Activated T-helper 2 cell treated with anti-CD3 and anti-CD28 coated beads, Interferon-gamma antibody, Interleukin-2, Interleukin-4, amounts not matched to agents 10 μg/mL and 5 μg/mL and 100 μg/mL, durations not matched to agents 14 hours and 24 hours and 36 hours (primary cell): ENCODE measurements at regions of chr2 and their contacts with region 1.

Region 1: GRCh38 chr2:46979571-46979979 is 64.0 kb upstream of the MCFD2 start:
- DNase-seq: no peak
- H3K4me3 Mint-ChIP-seq: peak overlapping the region; percentile 65
- H3K27ac Mint-ChIP-seq: peak overlapping the region; percentile 84
- H3K4me1 Mint-ChIP-seq: peaks cover 61% of the 10 kb centered on the region
- H3K27me3 Mint-ChIP-seq: no peaks in the 10 kb centered on the region

Region 2: DNA sequence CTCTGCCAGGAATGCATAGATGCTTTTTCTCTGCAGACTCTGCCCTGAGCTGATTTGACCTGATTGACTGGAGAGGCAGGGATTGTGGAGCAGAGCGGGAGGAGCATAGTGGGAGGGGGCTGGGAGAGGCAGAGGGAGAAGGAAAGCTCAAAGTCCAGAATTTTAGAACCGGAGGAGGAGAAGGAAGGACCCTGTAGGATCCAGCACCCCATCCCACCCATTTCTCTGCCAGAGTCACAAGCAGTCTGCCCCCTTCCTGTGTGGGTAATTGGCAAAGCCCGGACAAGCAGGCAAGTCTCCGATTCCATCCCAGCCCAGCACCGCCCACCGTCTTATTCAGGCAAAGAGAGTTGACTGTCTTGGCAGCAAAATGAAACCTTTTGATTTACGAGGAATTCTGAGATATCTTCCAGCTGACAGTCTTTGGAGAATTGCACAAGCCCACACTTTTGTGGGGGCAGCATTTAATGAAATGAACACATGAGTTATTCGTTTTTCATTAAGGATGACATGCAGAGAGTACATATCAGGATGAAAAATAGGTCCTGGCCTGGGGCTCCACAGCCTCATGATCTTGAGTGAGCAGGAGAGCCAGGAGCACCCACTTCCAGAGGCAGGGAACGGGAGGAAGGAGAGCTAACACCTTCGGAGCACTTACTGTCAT is 167.1 kb before region 1 on chr2:
- intact Hi-C with region 1: no loop called
- DNase-seq: no peak
- H3K4me3 Mint-ChIP-seq: no peak overlapping the region
- H3K27ac Mint-ChIP-seq: no peak overlapping the region
- H3K4me1 Mint-ChIP-seq: peaks cover 1% of the 10 kb centered on the region
- H3K27me3 Mint-ChIP-seq: peaks cover 30% of the 10 kb centered on the region

Region 3: GRCh38 chr2:46942139-46942517 is 37.4 kb before region 1 on chr2:
- intact Hi-C with region 1: loop called (anchors 1 kb)
- DNase-seq: peak; percentile 69
- H3K4me3 Mint-ChIP-seq: peak overlapping the region; percentile 99
- H3K27ac Mint-ChIP-seq: peak overlapping the region; percentile 99
- H3K4me1 Mint-ChIP-seq: peaks cover 46% of the 10 kb centered on the region
- H3K27me3 Mint-ChIP-seq: no peaks in the 10 kb centered on the region